ENCODE measurements at regions of chr11 and their contacts with region 1.

Region 1: DNA sequence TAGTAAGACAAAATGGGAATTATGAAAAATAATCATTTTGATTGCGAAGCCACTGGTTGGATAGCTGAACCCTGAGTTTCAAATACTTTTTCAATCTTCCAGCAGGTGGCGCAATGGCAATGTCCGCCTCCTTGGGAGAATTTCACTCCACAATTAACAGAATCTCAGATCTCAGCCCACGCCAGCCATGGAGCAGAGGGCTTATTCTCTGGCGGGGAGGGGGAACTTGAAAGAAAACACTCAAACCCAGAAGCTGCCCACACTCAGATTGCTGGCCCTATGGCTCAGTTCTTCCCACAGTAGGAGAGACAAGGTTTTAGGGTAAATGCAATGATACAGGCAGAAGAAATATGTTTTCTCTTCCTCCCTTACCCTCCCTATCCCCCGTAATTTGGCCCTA is 38.7 kb upstream of the RCN1 start:
- DNase-seq: peak; percentile 21 to 59 (median 36)
- H3K4me3 ChIP-seq: no peak overlapping the region
- H3K4me3 Mint-ChIP-seq: no peak overlapping the region
- H3K27ac ChIP-seq: no peak overlapping the region
- H3K27ac Mint-ChIP-seq: peak overlapping the region in 2 of 8 donors; percentile 8 to 10
- H3K4me1 ChIP-seq: no peaks in the 10 kb centered on the region
- H3K4me1 Mint-ChIP-seq: no peaks in the 10 kb centered on the region
- H3K27me3 ChIP-seq: no peaks in the 10 kb centered on the region
- H3K27me3 Mint-ChIP-seq: peaks cover 22 to 68% of the 10 kb centered on the region in 2 donors

Region 2: GRCh38 chr11:32015427-32015826 is 36.8 kb before region 1 on chr11:
- CTCF ChIA-PET with region 1: no interaction called
- POLR2A ChIA-PET with region 1: no interaction called
- DNase-seq: no peak
- H3K4me3 ChIP-seq: no peak overlapping the region
- H3K4me3 Mint-ChIP-seq: no peak overlapping the region
- H3K27ac ChIP-seq: no peak overlapping the region
- H3K27ac Mint-ChIP-seq: no peak overlapping the region
- H3K4me1 ChIP-seq: no peaks in the 10 kb centered on the region
- H3K4me1 Mint-ChIP-seq: no peaks in the 10 kb centered on the region
- H3K27me3 ChIP-seq: peaks cover 4% of the 10 kb centered on the region
- H3K27me3 Mint-ChIP-seq: peaks cover 8 to 51% of the 10 kb centered on the region in 2 donors

Region 3: GRCh38 chr11:32176223-32176934 is 124.2 kb after region 1 on chr11:
- CTCF ChIA-PET with region 1: interaction called, 79 read pairs
- POLR2A ChIA-PET with region 1: no interaction called
- DNase-seq: peak; percentile 59 to 79 (median 69)
- H3K4me3 ChIP-seq: no peak overlapping the region
- H3K4me3 Mint-ChIP-seq: no peak overlapping the region
- H3K27ac ChIP-seq: no peak overlapping the region
- H3K27ac Mint-ChIP-seq: no peak overlapping the region
- H3K4me1 ChIP-seq: no peaks in the 10 kb centered on the region
- H3K4me1 Mint-ChIP-seq: peaks cover 4 to 11% (median 5%) of the 10 kb centered on the region in 3 donors
- H3K27me3 ChIP-seq: no peaks in the 10 kb centered on the region
- H3K27me3 Mint-ChIP-seq: peaks cover 7 to 9% of the 10 kb centered on the region in 2 donors

Region 4: DNA sequence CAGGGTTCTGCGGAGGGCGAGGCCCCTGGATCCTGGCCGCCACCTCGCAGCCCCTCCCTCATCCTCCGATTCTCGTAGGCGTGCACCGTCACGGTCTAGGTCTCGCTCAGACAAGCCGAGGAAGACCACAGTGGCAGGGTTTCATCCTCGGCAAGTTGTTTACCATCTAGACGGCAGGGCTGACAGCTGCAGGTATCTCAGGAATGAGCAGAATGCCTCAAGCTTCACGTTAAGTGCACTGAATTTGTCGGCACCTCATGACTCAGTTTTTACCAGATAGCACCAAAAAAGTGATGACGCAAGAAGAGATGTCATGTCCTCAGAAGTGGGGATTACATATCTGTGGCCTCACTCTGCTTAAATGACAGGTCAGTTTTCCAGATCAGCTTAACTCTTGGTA is 348.0 kb after region 1 on chr11:
- CTCF ChIA-PET with region 1: no interaction called
- POLR2A ChIA-PET with region 1: no interaction called
- DNase-seq: no peak
- H3K4me3 ChIP-seq: no peak overlapping the region
- H3K4me3 Mint-ChIP-seq: no peak overlapping the region
- H3K27ac ChIP-seq: no peak overlapping the region
- H3K27ac Mint-ChIP-seq: no peak overlapping the region
- H3K4me1 ChIP-seq: no peaks in the 10 kb centered on the region
- H3K4me1 Mint-ChIP-seq: no peaks in the 10 kb centered on the region
- H3K27me3 ChIP-seq: no peaks in the 10 kb centered on the region
- H3K27me3 Mint-ChIP-seq: peaks cover 5 to 38% of the 10 kb centered on the region in 2 donors

Region 5: DNA sequence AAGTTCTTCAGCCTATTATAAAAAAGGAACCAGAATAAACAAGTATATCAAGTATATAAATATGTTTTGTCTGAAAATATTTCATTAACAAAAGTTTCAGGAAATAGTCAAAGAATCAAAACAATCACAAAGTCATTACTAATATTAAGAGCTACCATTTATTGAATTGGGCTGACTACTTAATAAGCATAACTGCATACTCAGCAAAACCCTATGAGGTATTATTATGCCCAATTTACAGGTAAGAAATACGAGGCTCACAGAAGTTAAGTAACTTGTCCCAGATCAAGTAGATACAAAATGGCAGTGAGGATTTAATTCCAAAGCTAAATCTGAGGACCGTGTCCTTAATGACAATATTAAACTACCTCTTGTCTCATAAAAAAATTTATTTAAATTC is 583.6 kb after region 1 on chr11:
- CTCF ChIA-PET with region 1: no interaction called
- POLR2A ChIA-PET with region 1: no interaction called
- DNase-seq: no peak
- H3K4me3 ChIP-seq: no peak overlapping the region
- H3K4me3 Mint-ChIP-seq: no peak overlapping the region
- H3K27ac ChIP-seq: no peak overlapping the region
- H3K27ac Mint-ChIP-seq: no peak overlapping the region
- H3K4me1 ChIP-seq: no peaks in the 10 kb centered on the region
- H3K4me1 Mint-ChIP-seq: no peaks in the 10 kb centered on the region
- H3K27me3 ChIP-seq: no peaks in the 10 kb centered on the region
- H3K27me3 Mint-ChIP-seq: peaks cover 8 to 31% of the 10 kb centered on the region in 2 donors

Measured in CD8-positive, alpha-beta memory T cell (primary cell).